Mammary epithelial cell (primary cell): ENCODE measurements at regions of chr4 and their contacts with region 1.

Region 1: DNA sequence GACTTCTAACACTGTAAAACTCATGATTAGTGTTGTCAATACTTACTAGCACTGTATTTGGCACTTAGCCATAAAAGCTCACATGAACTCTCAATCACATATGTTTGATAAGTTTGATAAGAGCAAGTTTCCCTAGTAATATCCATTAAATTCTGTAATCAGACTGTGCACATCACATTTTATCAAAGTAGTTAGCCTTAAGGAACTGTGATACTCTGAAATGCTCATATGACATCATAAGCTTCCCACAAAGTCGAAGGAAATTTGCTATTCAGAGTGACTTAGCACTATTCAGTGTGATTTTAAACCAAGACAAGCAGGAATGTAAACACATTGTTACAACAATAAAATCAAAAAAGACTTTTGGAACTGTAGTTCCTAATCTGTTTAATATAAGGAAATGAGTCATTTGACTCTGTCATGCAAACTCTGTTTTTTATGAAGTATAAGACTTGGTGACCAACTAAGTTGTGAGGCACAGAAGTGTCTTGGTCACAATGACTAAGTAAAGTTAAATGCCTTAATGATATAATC is 6.7 kb downstream of the SLC7A11 start:
- DNase-seq: peak; percentile 64
- H3K4me3 ChIP-seq: no peak overlapping the region
- H3K27ac ChIP-seq: peak overlapping the region; percentile 61
- H3K4me1 ChIP-seq: peaks cover 5% of the 10 kb centered on the region
- H3K27me3 ChIP-seq: no peaks in the 10 kb centered on the region
- CTCF ChIP-seq: no peak

Region 2: DNA sequence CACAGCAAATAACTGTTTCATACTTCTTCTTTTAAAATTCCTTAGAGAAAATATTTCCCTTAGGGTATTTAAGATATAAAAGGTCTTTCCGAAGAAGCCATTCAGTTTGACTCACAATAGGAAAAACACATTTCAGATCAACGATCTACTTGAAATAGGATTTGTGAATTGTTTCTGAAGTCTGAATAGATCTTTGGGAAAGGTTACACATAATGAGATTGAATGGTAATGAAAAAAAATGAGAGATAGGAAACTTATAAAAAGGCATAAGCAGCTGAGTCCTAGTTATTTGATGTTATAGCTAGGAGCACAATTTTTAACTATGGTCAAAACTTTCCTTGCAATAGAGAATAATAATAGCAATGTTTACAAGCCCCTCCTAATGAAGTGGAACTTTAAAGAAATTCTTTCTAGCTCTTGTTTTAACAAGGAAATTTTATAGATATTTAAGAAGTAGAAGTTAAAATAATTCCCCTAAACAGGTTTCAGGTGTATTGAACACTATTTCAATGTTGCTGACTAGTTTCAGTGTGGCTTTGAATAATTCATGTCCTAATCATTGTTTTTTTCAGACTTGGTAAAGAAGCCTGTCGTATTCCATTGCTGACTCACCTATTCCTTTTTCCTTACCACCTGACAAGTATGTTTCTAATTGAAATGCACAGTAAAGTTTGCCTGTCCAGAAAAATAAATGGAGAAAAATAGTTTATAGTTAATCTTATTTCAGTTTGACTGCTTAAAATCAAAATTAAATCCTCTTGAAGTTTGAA is 792.3 kb before region 1 on chr4:
- CTCF ChIA-PET with region 1: no interaction called
- dilution Hi-C with region 1: no loop called
- in situ Hi-C with region 1: no loop called
- intact Hi-C with region 1: no loop called
- DNase-seq: no peak
- H3K4me3 ChIP-seq: no peak overlapping the region
- H3K27ac ChIP-seq: no peak overlapping the region
- H3K4me1 ChIP-seq: no peaks in the 10 kb centered on the region
- H3K27me3 ChIP-seq: no peaks in the 10 kb centered on the region
- CTCF ChIP-seq: no peak

Region 3: GRCh38 chr4:138522366-138522765 is 286.9 kb after region 1 on chr4:
- CTCF ChIA-PET with region 1: no interaction called
- dilution Hi-C with region 1: no loop called
- in situ Hi-C with region 1: loop called (anchors 10 to 25 kb)
- intact Hi-C with region 1: no loop called
- DNase-seq: peak; percentile 30
- H3K4me3 ChIP-seq: no peak overlapping the region
- H3K27ac ChIP-seq: no peak overlapping the region
- H3K4me1 ChIP-seq: no peaks in the 10 kb centered on the region
- H3K27me3 ChIP-seq: no peaks in the 10 kb centered on the region
- CTCF ChIP-seq: peak; percentile 44 to 73